ENCODE measurements at regions of chr6 and their contacts with region 1.

Region 1: DNA sequence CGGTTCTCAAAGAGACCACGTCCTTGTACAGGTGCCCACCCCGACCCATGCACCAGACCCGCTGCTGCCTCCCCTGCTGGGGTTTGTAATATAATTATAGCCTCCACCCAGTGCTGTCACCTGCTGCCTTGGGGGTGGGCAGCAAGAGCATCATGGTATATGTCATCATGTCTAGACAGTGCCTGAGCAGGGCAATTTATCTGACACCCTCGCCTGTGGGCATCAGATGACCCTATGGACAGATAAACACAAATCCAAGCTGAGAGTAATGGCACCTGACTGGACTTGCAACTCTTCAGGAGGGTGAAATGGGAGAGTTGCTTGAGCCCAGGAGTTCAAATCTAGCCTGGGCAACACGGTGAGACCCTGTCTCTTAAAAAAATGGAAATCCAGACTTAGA is 23.0 kb upstream of the TUBB2A start:
- DNase-seq: no peak
- H3K4me3 ChIP-seq: no peak overlapping the region
- H3K4me3 Mint-ChIP-seq: no peak overlapping the region
- H3K27ac ChIP-seq: no peak overlapping the region
- H3K27ac Mint-ChIP-seq: no peak overlapping the region
- H3K4me1 ChIP-seq: peaks cover 0 to 4% of the 10 kb centered on the region in 2 donors
- H3K4me1 Mint-ChIP-seq: peaks cover 14% of the 10 kb centered on the region
- H3K27me3 ChIP-seq: peaks cover 0 to 2% of the 10 kb centered on the region in 2 donors
- H3K27me3 Mint-ChIP-seq: peaks cover 9 to 30% (median 15%) of the 10 kb centered on the region in 3 donors
- CTCF ChIP-seq: no peak

Region 2: DNA sequence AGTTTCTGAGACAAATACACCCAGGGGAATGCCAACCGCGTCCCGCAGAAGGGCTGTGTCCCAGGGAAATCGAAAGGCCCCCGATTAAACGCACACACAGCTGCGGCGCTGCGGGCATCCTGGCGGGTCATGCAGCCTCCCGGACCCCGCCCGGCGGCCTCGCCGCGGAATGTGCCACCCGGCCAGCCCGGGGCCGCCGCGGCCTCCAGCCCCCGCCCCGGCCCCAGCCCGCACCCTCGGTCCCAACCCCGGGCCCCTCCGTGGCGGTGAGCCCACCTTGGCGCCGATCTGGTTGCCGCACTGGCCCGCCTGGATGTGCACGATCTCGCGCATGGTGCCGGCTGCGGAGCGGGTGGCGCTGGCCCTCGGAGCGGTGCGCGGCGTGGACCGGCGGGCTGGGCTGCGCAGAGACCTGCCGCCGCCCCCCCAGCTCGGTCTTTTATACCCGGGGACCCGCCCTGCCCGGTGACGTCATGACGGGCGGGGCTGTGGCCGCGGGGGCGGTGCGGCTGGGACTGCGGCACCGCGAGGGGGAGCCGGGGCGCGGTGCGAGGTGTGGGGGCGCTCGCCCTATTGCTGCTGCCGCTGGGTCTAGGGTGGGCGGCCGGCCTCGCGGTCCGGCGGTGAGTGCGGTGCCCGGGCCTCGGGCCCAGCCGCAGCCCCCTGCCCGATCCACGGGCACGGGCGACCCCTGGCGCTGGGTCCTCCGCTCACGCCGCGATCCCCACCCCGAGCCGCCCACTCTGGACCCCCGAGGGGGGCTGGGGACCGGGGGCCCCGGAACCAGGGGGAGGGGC is 23.0 kb before region 1 on chr6 and contains the start of gene TUBB2A:
- intact Hi-C with region 1: loop called in 1 of 2 experiments (anchors 1 kb)
- DNase-seq: peak; percentile 63 to 80 (median 76)
- H3K4me3 ChIP-seq: peak within 1 kb of the TSS; percentile 50 to 95 (median 76)
- H3K4me3 Mint-ChIP-seq: peak within 1 kb of the TSS; percentile 87 to 93
- H3K27ac ChIP-seq: peak within 1 kb of the TSS in 1 of 2 donors; percentile 85
- H3K27ac Mint-ChIP-seq: peak within 1 kb of the TSS in 6 of 7 donors; percentile 63 to 86 (median 78)
- H3K4me1 ChIP-seq: peaks cover 15 to 42% of the 10 kb centered on the region in 2 donors
- H3K4me1 Mint-ChIP-seq: peaks cover 25% of the 10 kb centered on the region
- H3K27me3 ChIP-seq: peaks cover 13 to 50% of the 10 kb centered on the region in 2 donors
- H3K27me3 Mint-ChIP-seq: peaks cover 50 to 69% (median 62%) of the 10 kb centered on the region in 3 donors
- CTCF ChIP-seq: peak; percentile 65
- polyA plus RNA-seq, gene TUBB2A: 2.4 to 74.3 (median 4.2) TPM